CD8-positive, alpha-beta T cell (primary cell): ENCODE measurements at regions of chr11 and their contacts with region 1.

Region 1: GRCh38 chr11:103682318-103683184 is 353.9 kb upstream of the DDI1 start:
- DNase-seq: peak; percentile 3 to 72 (median 27)
- ATAC-seq: peak; percentile 78
- H3K4me3 ChIP-seq: no peak overlapping the region
- H3K4me3 Mint-ChIP-seq: no peak overlapping the region
- H3K27ac ChIP-seq: no peak overlapping the region
- H3K27ac Mint-ChIP-seq: no peak overlapping the region
- H3K4me1 ChIP-seq: no peaks in the 10 kb centered on the region
- H3K4me1 Mint-ChIP-seq: peaks cover 4% of the 10 kb centered on the region
- H3K27me3 ChIP-seq: no peaks in the 10 kb centered on the region
- H3K27me3 Mint-ChIP-seq: no peaks in the 10 kb centered on the region
- CTCF ChIP-seq: peak; percentile 35

Region 2: DNA sequence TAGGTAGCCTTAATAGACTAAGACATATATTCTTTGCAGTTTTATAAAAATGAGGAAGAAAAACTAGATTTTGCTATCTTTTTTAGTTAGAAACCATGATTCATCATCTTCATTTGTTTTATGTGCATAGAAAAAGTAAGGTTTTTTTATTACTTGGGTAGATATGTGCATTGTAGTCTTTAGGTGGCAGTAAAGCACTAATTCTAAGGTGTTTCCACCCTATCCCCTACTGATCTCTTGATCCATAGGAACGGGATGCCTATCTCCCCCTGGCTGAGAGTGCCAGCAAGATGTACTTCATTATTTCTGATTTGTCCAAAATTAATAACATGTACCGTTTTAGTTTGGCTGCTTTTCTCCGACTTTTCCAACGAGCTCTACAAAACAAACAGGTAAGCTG is 425.2 kb before region 1 on chr11:
- CTCF ChIA-PET with region 1: no interaction called
- POLR2A ChIA-PET with region 1: no interaction called
- intact Hi-C with region 1: no loop called
- DNase-seq: no peak
- ATAC-seq: no peak
- H3K4me3 ChIP-seq: no peak overlapping the region
- H3K4me3 Mint-ChIP-seq: no peak overlapping the region
- H3K27ac ChIP-seq: no peak overlapping the region
- H3K27ac Mint-ChIP-seq: no peak overlapping the region
- H3K4me1 ChIP-seq: no peaks in the 10 kb centered on the region
- H3K4me1 Mint-ChIP-seq: no peaks in the 10 kb centered on the region
- H3K27me3 ChIP-seq: no peaks in the 10 kb centered on the region
- H3K27me3 Mint-ChIP-seq: no peaks in the 10 kb centered on the region
- CTCF ChIP-seq: no peak

Region 3: DNA sequence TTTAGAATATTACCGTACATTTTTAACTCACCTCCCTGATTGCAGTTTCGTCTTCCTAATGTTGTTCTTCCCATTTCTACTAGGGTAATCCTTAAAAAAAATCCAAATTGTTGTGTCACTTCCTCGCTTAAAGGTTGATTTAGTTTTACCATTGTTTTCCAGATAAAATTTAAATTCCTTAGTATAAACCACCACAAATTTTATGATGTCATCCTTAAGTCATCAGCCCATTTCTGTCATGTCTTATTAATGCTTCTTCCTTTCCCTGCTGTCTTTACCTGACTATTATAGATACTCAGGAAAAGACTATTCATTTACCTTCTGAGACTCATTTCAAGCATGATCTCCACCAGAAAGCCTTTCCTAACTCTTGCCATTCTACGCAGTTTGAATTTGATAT is 252.1 kb before region 1 on chr11:
- CTCF ChIA-PET with region 1: no interaction called
- POLR2A ChIA-PET with region 1: no interaction called
- intact Hi-C with region 1: no loop called
- DNase-seq: no peak
- ATAC-seq: no peak
- H3K4me3 ChIP-seq: no peak overlapping the region
- H3K4me3 Mint-ChIP-seq: no peak overlapping the region
- H3K27ac ChIP-seq: no peak overlapping the region
- H3K27ac Mint-ChIP-seq: no peak overlapping the region
- H3K4me1 ChIP-seq: no peaks in the 10 kb centered on the region
- H3K4me1 Mint-ChIP-seq: no peaks in the 10 kb centered on the region
- H3K27me3 ChIP-seq: no peaks in the 10 kb centered on the region
- H3K27me3 Mint-ChIP-seq: no peaks in the 10 kb centered on the region
- CTCF ChIP-seq: no peak

Region 4: DNA sequence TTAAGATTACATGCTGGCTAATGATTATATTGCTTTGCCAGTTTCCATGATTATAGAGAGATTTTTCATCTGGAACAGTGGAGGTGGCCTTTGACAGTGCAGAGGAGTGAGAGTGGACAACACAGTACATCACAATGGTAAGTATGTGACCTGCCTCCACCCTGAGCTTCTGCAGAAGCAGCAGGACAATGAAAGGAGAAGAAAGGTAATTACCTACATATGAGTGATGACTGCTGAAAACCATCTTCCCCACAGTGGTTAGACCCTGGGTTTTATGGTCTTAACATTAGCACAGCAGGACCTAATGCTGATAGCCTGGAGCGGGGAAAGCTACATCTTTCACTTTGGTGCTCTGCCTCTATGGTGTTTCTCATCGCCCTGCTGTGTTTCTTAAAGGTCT is 100.8 kb before region 1 on chr11:
- CTCF ChIA-PET with region 1: no interaction called
- POLR2A ChIA-PET with region 1: no interaction called
- intact Hi-C with region 1: no loop called
- DNase-seq: no peak
- ATAC-seq: no peak
- H3K4me3 ChIP-seq: no peak overlapping the region
- H3K4me3 Mint-ChIP-seq: no peak overlapping the region
- H3K27ac ChIP-seq: no peak overlapping the region
- H3K27ac Mint-ChIP-seq: no peak overlapping the region
- H3K4me1 ChIP-seq: no peaks in the 10 kb centered on the region
- H3K4me1 Mint-ChIP-seq: no peaks in the 10 kb centered on the region
- H3K27me3 ChIP-seq: no peaks in the 10 kb centered on the region
- H3K27me3 Mint-ChIP-seq: no peaks in the 10 kb centered on the region
- CTCF ChIP-seq: no peak

Region 5: GRCh38 chr11:103656382-103656781 is 26.2 kb before region 1 on chr11:
- CTCF ChIA-PET with region 1: no interaction called
- POLR2A ChIA-PET with region 1: no interaction called
- intact Hi-C with region 1: no loop called
- DNase-seq: no peak
- ATAC-seq: no peak
- H3K4me3 ChIP-seq: no peak overlapping the region
- H3K4me3 Mint-ChIP-seq: no peak overlapping the region
- H3K27ac ChIP-seq: no peak overlapping the region
- H3K27ac Mint-ChIP-seq: no peak overlapping the region
- H3K4me1 ChIP-seq: no peaks in the 10 kb centered on the region
- H3K4me1 Mint-ChIP-seq: no peaks in the 10 kb centered on the region
- H3K27me3 ChIP-seq: no peaks in the 10 kb centered on the region
- H3K27me3 Mint-ChIP-seq: no peaks in the 10 kb centered on the region
- CTCF ChIP-seq: no peak

Region 6: GRCh38 chr11:104151404-104152204 is 469.1 kb after region 1 on chr11:
- CTCF ChIA-PET with region 1: no interaction called
- POLR2A ChIA-PET with region 1: no interaction called
- intact Hi-C with region 1: loop called (anchors 2 to 5 kb)
- DNase-seq: no peak
- ATAC-seq: no peak
- H3K4me3 ChIP-seq: no peak overlapping the region
- H3K4me3 Mint-ChIP-seq: no peak overlapping the region
- H3K27ac ChIP-seq: no peak overlapping the region
- H3K27ac Mint-ChIP-seq: no peak overlapping the region
- H3K4me1 ChIP-seq: no peaks in the 10 kb centered on the region
- H3K4me1 Mint-ChIP-seq: peaks cover 4% of the 10 kb centered on the region
- H3K27me3 ChIP-seq: no peaks in the 10 kb centered on the region
- H3K27me3 Mint-ChIP-seq: no peaks in the 10 kb centered on the region
- CTCF ChIP-seq: no peak